Endothelial cell of umbilical vein (primary cell): ENCODE measurements at regions of chr20 and their contacts with region 1.

Region 1: DNA sequence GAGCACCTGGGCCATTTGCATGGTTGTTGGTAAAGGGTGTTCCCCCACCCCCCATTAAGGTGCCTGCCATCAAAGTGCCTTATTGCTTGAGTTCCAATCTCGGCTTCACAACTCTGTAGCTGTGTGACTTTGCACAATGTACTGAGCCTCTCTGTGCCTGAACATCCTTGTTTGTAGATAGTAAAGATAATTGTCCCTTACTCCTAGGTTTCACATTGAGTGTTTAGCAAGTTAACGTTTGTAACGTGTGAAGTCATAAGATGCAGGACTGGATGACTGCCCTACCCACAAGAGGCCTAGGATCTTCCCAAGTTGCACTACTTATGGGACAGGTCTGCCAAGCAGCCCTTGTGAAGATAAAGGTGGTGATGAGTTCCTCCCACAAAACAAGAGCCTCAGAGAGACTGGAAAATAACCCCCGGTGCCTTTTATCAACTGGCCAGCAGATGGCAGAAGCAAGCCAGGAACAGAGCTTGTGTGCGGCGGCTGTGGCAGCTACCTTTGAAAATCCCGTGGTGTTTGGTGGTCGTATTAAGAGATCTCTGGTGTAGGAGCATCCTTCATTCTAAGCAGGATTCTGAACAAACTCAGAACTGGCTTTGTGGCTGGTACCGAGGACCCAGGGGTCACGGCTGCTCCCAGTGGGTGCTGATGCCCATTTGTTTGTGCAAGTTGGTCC is 99.0 kb downstream of the CDH26 start:
- DNase-seq: peak; percentile 12
- H3K4me3 ChIP-seq: no peak overlapping the region
- H3K27ac ChIP-seq: no peak overlapping the region
- H3K4me1 ChIP-seq: no peaks in the 10 kb centered on the region
- H3K27me3 ChIP-seq: no peaks in the 10 kb centered on the region
- CTCF ChIP-seq: peak; percentile 61 to 65
- POLR2A ChIP-seq: no peak

Region 2: DNA sequence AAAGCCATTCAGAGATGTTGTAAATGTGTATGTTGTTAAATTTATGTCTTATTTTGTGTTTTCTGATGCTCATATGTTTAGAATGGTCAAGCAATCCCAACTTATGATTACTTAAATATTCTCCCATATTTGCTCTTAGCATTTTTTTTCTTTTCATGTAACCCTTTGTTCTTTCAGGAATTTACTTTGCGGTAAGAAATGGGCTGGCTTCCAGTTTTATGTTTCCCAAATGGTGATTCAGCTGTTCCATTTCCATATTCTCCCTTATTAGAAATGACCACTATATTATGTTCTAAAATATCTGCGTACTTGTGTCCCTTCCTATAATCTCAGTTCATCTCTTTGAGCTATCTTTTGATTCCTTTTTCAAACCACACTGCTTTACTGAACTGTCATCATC is 14.7 kb after region 1 on chr20:
- CTCF ChIA-PET with region 1: no interaction called
- POLR2A ChIA-PET with region 1: no interaction called
- dilution Hi-C with region 1: no loop called
- intact Hi-C with region 1: no loop called
- DNase-seq: no peak
- H3K4me3 ChIP-seq: no peak overlapping the region
- H3K27ac ChIP-seq: no peak overlapping the region
- H3K4me1 ChIP-seq: no peaks in the 10 kb centered on the region
- H3K27me3 ChIP-seq: no peaks in the 10 kb centered on the region
- CTCF ChIP-seq: no peak
- POLR2A ChIP-seq: no peak

Region 3: DNA sequence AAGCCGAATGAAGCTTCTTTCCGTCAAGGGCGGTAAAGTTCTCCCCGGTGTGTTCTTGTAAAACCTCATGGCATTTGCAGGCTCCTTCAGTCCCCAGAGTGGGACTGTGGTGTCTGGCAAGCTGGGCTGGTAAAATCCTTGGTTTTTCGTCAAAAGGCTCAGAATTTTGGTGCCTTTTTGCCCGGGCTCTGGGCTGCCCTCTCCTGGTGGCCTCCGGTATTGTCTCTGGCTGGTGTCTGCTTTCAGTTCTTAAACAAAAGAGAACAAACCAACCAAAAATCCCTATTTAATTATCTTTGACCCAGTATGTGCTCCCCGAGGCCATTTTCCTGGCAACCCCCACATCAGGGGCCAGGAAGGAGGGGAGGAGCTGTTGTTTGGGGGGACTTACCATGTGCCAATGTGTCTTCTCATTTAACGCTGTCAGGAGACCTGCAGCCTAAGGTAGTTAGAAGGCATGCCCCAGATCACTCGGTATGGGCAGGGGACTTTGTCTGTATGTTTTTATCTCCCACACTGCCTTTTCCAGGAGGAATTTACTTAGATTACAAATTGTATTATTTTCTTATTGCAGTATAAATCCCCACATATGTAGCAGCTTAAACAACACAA is 1205.9 kb after region 1 on chr20:
- CTCF ChIA-PET with region 1: interaction called, 4 read pairs
- POLR2A ChIA-PET with region 1: no interaction called
- dilution Hi-C with region 1: no loop called
- intact Hi-C with region 1: loop called (anchors 2 kb)
- DNase-seq: no peak
- H3K4me3 ChIP-seq: no peak overlapping the region
- H3K27ac ChIP-seq: no peak overlapping the region
- H3K4me1 ChIP-seq: no peaks in the 10 kb centered on the region
- H3K27me3 ChIP-seq: no peaks in the 10 kb centered on the region
- CTCF ChIP-seq: peak; percentile 60 to 64
- POLR2A ChIP-seq: no peak

Region 4: GRCh38 chr20:61896058-61896961 is 1839.0 kb after region 1 on chr20:
- CTCF ChIA-PET with region 1: interaction called, 23 read pairs
- POLR2A ChIA-PET with region 1: no interaction called
- dilution Hi-C with region 1: no loop called
- intact Hi-C with region 1: no loop called
- DNase-seq: peak; percentile 22
- H3K4me3 ChIP-seq: no peak overlapping the region
- H3K27ac ChIP-seq: no peak overlapping the region
- H3K4me1 ChIP-seq: no peaks in the 10 kb centered on the region
- H3K27me3 ChIP-seq: no peaks in the 10 kb centered on the region
- CTCF ChIP-seq: peak; percentile 63 to 86
- POLR2A ChIP-seq: no peak